Endothelial cell of umbilical vein (primary cell): ENCODE measurements at regions of chr16 and their contacts with region 1.

Region 1: GRCh38 chr16:30445408-30446202 is at the start of gene SEPHS2:
- DNase-seq: peak; percentile 97
- H3K4me3 ChIP-seq: peak within 1 kb of the TSS; percentile 57 to 79 (median 68)
- H3K27ac ChIP-seq: peak within 1 kb of the TSS; percentile 72
- H3K4me1 ChIP-seq: peaks cover 11% of the 10 kb centered on the region
- H3K27me3 ChIP-seq: no peaks in the 10 kb centered on the region
- CTCF ChIP-seq: peak; percentile 29 to 53
- POLR2A ChIP-seq: peak; percentile 93
- total RNA-seq, gene SEPHS2: 32.0 and 32.8 TPM in 2 replicates

Region 2: DNA sequence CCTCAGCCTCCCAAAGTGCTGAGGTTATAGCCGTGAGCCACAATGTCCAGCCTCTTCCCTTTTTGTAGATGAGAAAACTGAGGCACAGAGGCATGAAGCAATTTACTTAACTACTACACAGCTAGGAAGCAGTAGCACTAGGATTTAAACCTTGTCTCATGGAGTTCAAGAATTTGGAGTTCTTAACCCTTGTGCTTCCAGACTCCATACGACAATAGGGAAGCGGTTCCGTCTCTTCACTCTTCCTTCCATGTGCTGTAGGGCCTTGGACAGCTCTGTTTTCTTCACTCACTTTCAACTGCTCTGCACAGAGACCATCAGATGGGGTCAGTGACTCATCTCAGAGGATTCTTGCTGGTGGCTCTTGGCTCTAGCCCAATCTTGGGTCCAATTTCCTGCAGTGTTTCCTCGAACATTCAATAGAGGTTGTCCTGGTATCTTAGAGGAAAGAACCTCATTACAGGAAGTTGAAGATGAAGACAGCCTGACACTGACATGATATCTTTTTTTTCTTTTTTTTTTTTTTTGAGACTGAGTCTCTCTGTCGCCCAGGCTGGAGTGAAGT is 46.2 kb after region 1 on chr16:
- CTCF ChIA-PET with region 1: interaction called, 5 read pairs
- POLR2A ChIA-PET with region 1: no interaction called
- dilution Hi-C with region 1: no loop called
- intact Hi-C with region 1: loop called (anchors 5 kb)
- DNase-seq: peak; percentile 74
- H3K4me3 ChIP-seq: no peak overlapping the region
- H3K27ac ChIP-seq: no peak overlapping the region
- H3K4me1 ChIP-seq: peaks cover 9% of the 10 kb centered on the region
- H3K27me3 ChIP-seq: no peaks in the 10 kb centered on the region
- CTCF ChIP-seq: no peak
- POLR2A ChIP-seq: no peak

Region 3: GRCh38 chr16:30534368-30535105 is 88.9 kb after region 1 on chr16 and contains the start of gene ZNF747:
- CTCF ChIA-PET with region 1: interaction called, 30 read pairs
- POLR2A ChIA-PET with region 1: no interaction called
- dilution Hi-C with region 1: no loop called
- intact Hi-C with region 1: loop called (anchors 2 kb)
- DNase-seq: peak; percentile 86
- H3K4me3 ChIP-seq: peak within 1 kb of the TSS; percentile 62 to 76 (median 67)
- H3K27ac ChIP-seq: peak within 1 kb of the TSS; percentile 76
- H3K4me1 ChIP-seq: peaks cover 14% of the 10 kb centered on the region
- H3K27me3 ChIP-seq: no peaks in the 10 kb centered on the region
- CTCF ChIP-seq: no peak
- POLR2A ChIP-seq: peak; percentile 76
- total RNA-seq, gene ZNF747: 7.2 and 8.6 TPM in 2 replicates

Region 4: DNA sequence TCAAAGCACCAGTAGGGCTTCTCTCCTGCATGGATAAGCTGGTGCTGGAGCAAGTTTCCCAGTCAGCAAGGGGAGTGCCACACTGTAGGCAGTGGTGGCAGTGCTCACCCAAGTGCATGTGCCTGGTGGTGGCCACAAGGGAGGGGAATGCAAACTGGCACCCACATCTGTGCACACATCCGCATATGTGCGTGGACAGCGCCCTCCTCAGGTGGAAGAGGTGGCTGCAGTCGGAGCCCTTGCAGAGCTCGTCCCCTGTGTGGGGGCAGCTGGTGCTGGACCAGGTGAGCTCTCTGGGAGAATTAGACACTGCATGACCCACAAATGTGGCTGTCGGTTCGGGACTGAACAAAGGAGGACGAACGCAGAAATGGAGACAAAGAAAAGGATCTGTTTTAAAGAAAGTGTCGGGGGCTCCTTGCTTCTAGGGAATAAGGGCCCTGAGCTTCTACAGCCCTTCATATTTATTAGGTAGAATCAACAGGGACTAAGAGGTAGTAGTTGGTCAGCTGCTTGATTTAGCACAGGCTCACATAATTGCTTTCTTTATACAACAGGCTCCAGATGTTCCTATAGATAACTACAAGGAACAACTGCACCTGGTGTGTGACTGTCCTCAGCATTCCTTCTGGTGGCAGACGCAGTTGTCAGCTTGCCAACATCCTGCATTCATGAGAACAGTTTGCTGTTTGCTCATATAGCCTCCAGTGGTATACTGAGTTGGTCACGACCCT is 169.9 kb after region 1 on chr16:
- CTCF ChIA-PET with region 1: interaction called, 9 read pairs
- POLR2A ChIA-PET with region 1: no interaction called
- dilution Hi-C with region 1: no loop called
- intact Hi-C with region 1: loop called (anchors 1 kb)
- DNase-seq: peak; percentile 35
- H3K4me3 ChIP-seq: no peak overlapping the region
- H3K27ac ChIP-seq: no peak overlapping the region
- H3K4me1 ChIP-seq: no peaks in the 10 kb centered on the region
- H3K27me3 ChIP-seq: peaks cover 0 to 2% of the 10 kb centered on the region in 2 experiments
- CTCF ChIP-seq: peak; percentile 58 to 68
- POLR2A ChIP-seq: no peak

Region 5: GRCh38 chr16:30692381-30693064 is 246.9 kb after region 1 on chr16:
- CTCF ChIA-PET with region 1: interaction called, 5 read pairs
- POLR2A ChIA-PET with region 1: interaction called, 3 read pairs
- dilution Hi-C with region 1: no loop called
- intact Hi-C with region 1: loop called (anchors 5 kb)
- DNase-seq: no peak
- H3K4me3 ChIP-seq: no peak overlapping the region
- H3K27ac ChIP-seq: no peak overlapping the region
- H3K4me1 ChIP-seq: peaks cover 8% of the 10 kb centered on the region
- H3K27me3 ChIP-seq: peaks cover 0 to 3% of the 10 kb centered on the region in 2 experiments
- CTCF ChIP-seq: no peak
- POLR2A ChIP-seq: no peak